GM13976 (cell line): ENCODE measurements at regions of chr2 and their contacts with region 1.

Region 1: GRCh38 chr2:98835831-98836385 is 100.1 kb downstream of the CRACDL start:
- DNase-seq: no peak
- CTCF ChIP-seq: no peak

Region 2: DNA sequence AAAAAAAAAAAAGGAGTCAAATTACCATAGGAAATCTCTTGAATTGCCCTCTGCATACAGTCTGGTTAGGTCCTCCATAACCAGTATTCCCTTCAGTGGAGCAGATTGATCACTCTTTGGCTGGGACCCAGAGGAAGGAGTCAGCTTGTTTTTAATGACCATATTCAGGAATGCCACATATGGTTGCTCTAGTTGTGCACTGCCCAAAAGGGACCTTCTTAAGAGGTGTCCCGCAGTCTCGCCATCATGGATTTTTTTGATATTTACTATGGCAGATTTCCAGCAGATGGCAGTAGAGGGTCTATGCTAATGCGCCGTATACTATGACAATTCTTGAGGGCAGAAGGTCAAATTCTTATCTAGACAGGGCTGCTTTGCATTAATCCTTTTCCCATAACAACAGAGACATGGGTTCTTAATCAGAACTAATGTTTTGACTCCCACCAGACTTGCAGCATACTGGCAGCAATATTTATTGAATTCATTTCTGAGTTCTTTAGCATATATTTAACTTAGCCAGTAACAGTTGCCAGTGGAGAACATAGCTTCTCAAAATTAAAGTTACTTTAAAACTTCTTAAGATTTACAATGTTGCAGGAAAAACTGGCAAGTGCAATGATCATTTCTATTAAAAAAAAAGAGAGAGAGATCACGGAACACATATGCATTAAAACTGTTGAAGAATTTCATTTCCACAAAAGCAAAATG is 423.0 kb before region 1 on chr2:
- in situ Hi-C with region 1: loop called (anchors 25 kb)
- DNase-seq: peak; percentile 60
- CTCF ChIP-seq: peak; percentile 61

Region 3: GRCh38 chr2:98654699-98655495 is 181.0 kb before region 1 on chr2:
- in situ Hi-C with region 1: loop called (anchors 10 kb)
- DNase-seq: no peak
- CTCF ChIP-seq: no peak

Region 4: GRCh38 chr2:99079226-99079625 is 243.3 kb after region 1 on chr2:
- in situ Hi-C with region 1: no loop called
- DNase-seq: no peak
- CTCF ChIP-seq: no peak